A673 (cell line): ENCODE measurements at regions of chr13 and their contacts with region 1.

Region 1: DNA sequence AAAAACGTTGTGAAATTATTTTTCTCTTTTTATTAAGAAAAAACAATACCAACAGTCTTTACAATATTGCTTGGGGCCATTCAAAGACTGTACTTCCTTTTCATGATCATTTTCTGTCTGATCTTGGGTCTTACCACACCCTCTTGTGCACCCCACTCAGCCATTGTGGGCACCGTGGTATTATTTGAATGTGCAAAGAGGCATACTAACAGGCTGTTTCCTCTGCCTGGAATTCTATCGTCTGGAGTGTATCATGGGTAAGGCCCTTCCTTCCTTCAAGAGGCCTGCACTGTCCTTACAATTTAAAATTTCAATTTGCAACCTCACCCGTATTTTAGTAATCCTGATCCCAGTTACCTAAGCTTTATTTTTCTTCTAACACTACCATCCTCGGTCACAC is 76.5 kb downstream of the FGF14 start:
- DNase-seq: peak; percentile 83
- H3K4me3 ChIP-seq: peak overlapping the region; percentile 10
- H3K27ac ChIP-seq: peak overlapping the region; percentile 92
- H3K4me1 ChIP-seq: peaks cover 86% of the 10 kb centered on the region
- H3K27me3 ChIP-seq: no peaks in the 10 kb centered on the region
- CTCF ChIP-seq: no peak

Region 2: DNA sequence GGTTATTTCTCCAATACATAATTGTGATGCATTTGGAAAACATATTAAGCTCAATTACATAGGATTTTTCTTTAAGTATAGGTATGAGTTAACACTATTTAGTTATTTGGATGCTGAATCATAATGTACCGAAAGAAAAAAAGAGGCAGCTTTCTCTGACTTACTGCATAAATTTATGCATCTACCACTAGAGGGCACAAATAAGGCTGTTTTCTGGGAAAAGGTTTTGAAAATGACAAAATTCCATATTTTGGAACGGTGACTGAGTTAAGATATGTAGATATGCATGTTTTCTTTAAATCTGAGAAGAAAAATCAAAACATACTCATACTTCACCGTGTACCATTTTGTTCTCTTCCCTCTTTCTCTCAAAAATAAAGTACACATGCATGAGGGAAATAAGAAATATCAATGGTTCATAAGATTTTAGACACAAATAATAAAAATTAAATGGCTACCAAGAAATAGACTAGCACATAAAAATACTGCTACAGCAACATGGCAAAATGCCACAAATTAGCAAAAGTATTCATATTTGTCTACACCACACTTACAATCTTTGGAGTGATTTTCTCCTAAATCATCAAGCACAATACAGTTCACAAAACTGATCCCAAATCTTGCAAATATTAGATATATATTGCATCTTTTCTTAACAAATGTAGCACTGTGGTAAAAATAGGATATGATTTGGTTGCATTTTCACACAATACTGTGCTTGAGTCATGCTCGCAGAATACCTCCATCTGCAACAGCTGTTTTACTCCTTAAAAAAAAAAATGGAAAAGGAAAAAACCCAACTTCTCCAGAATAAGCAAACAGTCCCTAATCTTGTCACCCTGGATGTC is 183.5 kb before region 1 on chr13:
- CTCF ChIA-PET with region 1: no interaction called
- POLR2A ChIA-PET with region 1: no interaction called
- intact Hi-C with region 1: loop called (anchors 1 kb)
- DNase-seq: peak; percentile 66
- H3K4me3 ChIP-seq: no peak overlapping the region
- H3K27ac ChIP-seq: no peak overlapping the region
- H3K4me1 ChIP-seq: peaks cover 23% of the 10 kb centered on the region
- H3K27me3 ChIP-seq: no peaks in the 10 kb centered on the region
- CTCF ChIP-seq: peak; percentile 87

Region 3: DNA sequence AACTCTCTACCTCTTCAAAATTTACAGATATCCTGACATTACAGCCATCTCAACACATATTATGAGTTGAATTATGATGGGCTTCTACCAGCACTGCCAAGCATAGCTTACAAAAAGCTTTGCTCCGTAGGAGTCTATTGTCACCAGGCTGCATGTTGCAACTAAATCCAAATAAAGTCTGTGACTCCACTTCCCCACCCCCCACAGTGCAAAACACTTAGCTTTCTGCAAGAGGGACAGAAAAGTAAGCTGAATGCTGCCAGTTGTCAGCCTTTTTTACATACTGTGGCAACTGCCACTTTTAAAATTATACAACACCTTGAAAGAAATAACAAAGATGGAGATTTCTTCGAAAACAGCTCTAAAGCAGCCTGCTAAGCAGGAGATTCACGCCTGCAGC is 112.6 kb before region 1 on chr13:
- CTCF ChIA-PET with region 1: no interaction called
- POLR2A ChIA-PET with region 1: interaction called, 17 read pairs
- intact Hi-C with region 1: loop called (anchors 5 kb)
- DNase-seq: peak; percentile 93
- H3K4me3 ChIP-seq: no peak overlapping the region
- H3K27ac ChIP-seq: peak overlapping the region; percentile 71
- H3K4me1 ChIP-seq: peaks cover 56% of the 10 kb centered on the region
- H3K27me3 ChIP-seq: no peaks in the 10 kb centered on the region
- CTCF ChIP-seq: no peak

Region 4: DNA sequence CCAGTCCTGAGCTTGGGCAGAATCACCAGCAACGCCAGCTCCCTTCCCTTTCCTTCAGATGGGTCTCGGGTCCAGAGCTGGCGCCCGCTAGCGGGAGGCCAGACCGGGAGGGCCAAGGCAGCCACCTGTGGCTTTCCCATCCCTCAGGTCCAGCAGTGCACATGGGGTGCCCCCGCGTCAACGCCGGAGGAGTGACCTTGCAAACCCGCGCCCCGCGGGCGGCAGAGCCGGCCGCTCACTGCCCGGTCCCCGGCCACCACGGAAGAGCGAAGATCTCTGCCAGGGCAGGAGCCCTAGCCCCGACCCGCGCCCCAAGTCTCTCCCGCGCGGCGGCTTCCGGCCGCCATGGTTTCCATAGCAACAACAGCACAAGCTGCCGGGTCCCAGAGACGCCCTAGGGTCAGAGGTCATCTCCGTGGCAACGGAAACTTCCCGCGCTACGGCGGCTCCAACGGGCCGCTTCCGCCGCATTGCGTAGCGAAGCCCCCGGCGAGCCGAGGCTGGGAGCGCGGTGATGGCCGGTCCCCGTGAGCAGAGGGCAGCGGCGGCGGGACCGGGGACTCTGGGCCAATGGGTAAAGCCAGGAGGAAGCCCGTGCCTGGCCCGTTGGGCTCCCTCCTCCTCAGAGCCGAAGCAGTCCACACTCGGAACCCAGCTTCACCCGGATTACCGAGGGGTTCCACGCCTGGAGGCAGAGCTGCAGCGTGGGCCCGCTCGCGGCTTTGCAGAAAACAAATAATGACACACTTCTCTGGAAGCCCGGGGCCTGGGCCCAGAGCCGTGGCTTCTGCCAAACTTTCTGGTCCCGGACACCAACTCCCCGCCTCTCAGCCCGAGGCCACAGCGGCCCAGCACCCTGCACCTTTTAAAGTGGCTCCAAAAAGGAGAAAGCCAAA is 69.1 kb after region 1 on chr13:
- CTCF ChIA-PET with region 1: no interaction called
- POLR2A ChIA-PET with region 1: interaction called, 3 read pairs
- intact Hi-C with region 1: loop called (anchors 2 kb)
- DNase-seq: peak; percentile 97
- H3K4me3 ChIP-seq: peak overlapping the region; percentile 73
- H3K27ac ChIP-seq: peak overlapping the region; percentile 98
- H3K4me1 ChIP-seq: peaks cover 65% of the 10 kb centered on the region
- H3K27me3 ChIP-seq: no peaks in the 10 kb centered on the region
- CTCF ChIP-seq: peak; percentile 53

Region 5: DNA sequence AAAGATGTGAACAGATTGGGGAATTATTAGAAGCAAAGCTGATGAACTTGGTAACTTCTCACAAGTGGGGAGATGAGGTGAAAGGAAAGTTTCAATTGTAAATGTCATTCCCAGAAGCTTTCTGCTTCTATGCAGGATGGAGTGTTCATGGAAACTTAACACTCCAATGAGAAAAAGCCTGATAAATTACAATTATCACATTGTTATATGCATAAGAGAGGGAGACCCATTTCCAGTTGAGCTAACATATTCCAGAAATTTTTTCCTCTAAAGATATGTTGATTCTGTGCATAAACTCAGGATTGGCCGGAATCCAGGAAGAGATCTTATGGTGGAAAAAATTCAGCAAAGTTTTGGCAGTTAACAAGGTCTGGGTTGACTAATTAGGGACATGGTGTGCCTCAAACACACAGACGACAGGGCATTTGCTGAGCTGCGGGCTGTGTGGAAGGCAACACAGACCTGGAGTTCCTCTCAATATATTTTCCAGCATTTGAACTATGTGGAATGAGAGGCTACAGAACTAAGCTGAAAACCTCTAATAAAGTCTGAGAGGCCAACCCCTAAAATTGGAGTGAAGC is 141.4 kb after region 1 on chr13:
- CTCF ChIA-PET with region 1: no interaction called
- POLR2A ChIA-PET with region 1: no interaction called
- intact Hi-C with region 1: no loop called
- DNase-seq: peak; percentile 8
- H3K4me3 ChIP-seq: no peak overlapping the region
- H3K27ac ChIP-seq: no peak overlapping the region
- H3K4me1 ChIP-seq: no peaks in the 10 kb centered on the region
- H3K27me3 ChIP-seq: no peaks in the 10 kb centered on the region
- CTCF ChIP-seq: no peak